Ascending aorta (tissue), 2 donors: ENCODE measurements at regions of chr20 and their contacts with region 1.

Region 1: GRCh38 chr20:31842471-31843157 is 2.8 kb downstream of the FOXS1 start:
- DNase-seq: peak in 1 of 2 donors; percentile 76
- H3K4me3 ChIP-seq: peak overlapping the region; percentile 52 to 70
- H3K27ac ChIP-seq: peak overlapping the region; percentile 94 to 95
- H3K4me1 ChIP-seq: peaks cover 39 to 61% of the 10 kb centered on the region in 2 donors
- H3K27me3 ChIP-seq: no peaks in the 10 kb centered on the region
- CTCF ChIP-seq: no peak

Region 2: GRCh38 chr20:31560094-31560899 is 282.3 kb before region 1 on chr20:
- intact Hi-C with region 1: loop called (anchors 5 kb)
- DNase-seq: peak; percentile 35 to 89
- H3K4me3 ChIP-seq: no peak overlapping the region
- H3K27ac ChIP-seq: peak overlapping the region; percentile 78 to 92
- H3K4me1 ChIP-seq: peaks cover 10 to 23% of the 10 kb centered on the region in 2 donors
- H3K27me3 ChIP-seq: no peaks in the 10 kb centered on the region
- CTCF ChIP-seq: peak; percentile 83 to 84 (median 83)

Region 3: DNA sequence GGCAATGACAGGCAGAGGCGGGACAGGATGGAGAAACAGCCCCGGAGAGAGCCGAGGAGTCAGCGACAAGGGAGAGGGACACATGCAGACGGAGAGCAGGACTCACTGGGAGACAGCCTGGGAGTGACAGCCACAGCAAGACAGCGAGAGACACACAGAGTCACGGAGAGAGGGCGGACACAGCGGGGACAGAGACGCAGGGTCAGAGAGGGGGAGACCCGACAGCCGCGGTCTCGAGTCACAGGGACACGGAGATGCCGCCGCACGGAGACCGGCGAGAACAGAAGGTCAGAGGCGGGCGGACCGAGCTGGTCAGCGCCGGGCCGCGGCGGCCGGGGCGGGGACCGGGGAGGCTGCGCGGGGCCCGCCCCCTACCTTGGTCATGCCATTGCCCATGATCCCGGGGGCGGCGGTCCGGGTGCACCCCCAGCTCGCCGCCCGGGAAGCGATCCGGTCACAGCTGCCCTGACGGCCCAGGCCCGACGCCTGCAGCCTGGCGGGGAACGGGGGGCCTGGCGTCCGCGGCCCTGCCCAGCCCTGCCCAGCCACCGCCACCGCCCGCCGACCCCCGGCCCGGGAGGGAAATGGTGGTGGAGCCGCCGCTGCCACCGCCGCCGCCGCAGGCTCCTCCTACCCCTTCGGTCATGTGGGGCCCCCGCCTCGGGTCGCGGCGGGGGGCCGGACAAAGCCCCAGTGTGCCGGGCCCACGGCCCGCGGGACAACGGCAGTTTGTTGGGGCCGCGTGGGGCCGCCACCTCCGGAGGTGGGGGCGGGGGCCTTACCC is 27.5 kb after region 1 on chr20 and contains the starts of genes DUSP15 and TTLL9:
- intact Hi-C with region 1: loop called (anchors 2 kb)
- DNase-seq: peak in 1 of 2 donors; percentile 77
- H3K4me3 ChIP-seq: peak within 1 kb of the TSS; percentile 88 to 90
- H3K27ac ChIP-seq: peak within 1 kb of the TSS; percentile 41 to 68
- H3K4me1 ChIP-seq: peaks cover 5 to 21% of the 10 kb centered on the region in 2 donors
- H3K27me3 ChIP-seq: no peaks in the 10 kb centered on the region
- CTCF ChIP-seq: no peak
- total RNA-seq, gene DUSP15: 13.0 TPM
- total RNA-seq, gene TTLL9: not detected

Region 4: GRCh38 chr20:31879143-31879987 is 36.8 kb after region 1 on chr20:
- intact Hi-C with region 1: loop called (anchors 1 kb)
- DNase-seq: peak; percentile 87 to 98
- H3K4me3 ChIP-seq: peak overlapping the region; percentile 62 to 63
- H3K27ac ChIP-seq: peak overlapping the region; percentile 59 to 76
- H3K4me1 ChIP-seq: peaks cover 0 to 4% of the 10 kb centered on the region in 2 donors
- H3K27me3 ChIP-seq: no peaks in the 10 kb centered on the region
- CTCF ChIP-seq: peak in 1 of 3 experiments; percentile 16

Region 5: GRCh38 chr20:33401184-33401920 is 1558.7 kb after region 1 on chr20 and contains the start of gene CDK5RAP1:
- intact Hi-C with region 1: no loop called
- DNase-seq: peak; percentile 46 to 93
- H3K4me3 ChIP-seq: peak within 1 kb of the TSS; percentile 76 to 94
- H3K27ac ChIP-seq: peak within 1 kb of the TSS; percentile 56 to 61
- H3K4me1 ChIP-seq: peaks cover 6 to 17% of the 10 kb centered on the region in 2 donors
- H3K27me3 ChIP-seq: no peaks in the 10 kb centered on the region
- CTCF ChIP-seq: no peak
- total RNA-seq, gene CDK5RAP1: 42.8 TPM